ENCODE measurements at regions of chr3 and their contacts with region 1.

Region 1: GRCh38 chr3:55180936-55181535 is 253.2 kb upstream of the LRTM1 start:
- DNase-seq: no peak

Region 2: DNA sequence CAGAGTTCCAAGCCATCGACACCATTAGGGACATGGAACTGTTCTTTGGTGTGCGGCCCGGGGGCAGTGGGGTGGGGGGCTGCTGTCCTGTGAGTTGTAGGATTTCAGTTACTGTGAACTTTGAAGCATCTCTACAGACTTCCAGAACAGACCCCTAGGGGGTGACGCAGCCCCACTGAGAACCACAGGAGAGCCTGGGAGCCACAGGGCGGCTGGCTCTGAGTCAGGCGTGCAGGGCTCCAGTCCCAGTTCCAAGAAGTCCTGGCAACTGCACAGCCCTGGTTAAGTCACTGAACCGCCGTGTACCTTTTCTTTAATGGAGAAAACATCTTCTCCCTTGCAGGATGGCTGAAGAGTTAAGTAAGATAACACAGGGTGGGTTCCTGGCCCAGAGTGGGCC is 229.6 kb before region 1 on chr3:
- intact Hi-C with region 1: loop called in 1 of 2 experiments (anchors 10 kb)
- DNase-seq: peak; percentile 94

Region 3: DNA sequence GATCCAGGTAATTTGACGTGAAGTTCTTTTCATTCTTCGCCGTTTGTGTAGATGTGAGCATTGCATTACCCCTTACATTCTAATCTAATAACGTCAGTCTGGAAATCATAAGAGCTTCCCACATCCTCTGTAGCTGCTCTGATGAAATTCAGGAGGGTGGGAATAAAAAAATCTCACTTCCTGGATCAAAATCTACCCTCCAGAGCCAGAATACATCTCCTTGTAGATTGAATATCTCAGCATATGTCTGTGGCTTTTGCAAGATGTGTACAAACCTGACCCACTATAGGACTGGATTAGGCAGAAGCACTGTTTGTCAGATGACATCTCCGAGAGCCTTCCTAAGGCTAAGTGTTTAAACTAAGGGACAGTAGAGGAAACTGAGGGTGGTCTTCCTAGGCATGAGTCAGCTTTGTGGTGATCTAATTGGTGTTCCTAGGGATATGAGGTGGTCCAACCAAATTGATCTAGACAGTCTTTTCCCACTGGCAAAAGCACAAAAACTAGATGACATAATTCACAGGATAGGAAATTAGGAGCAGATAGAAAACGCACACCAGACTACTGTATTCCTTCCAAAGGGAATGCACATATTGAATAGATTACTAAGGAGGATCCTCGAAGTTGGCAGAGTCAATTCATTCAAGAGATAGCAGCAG is 36.9 kb before region 1 on chr3:
- intact Hi-C with region 1: no loop called
- DNase-seq: no peak